Heart right ventricle (tissue), 16 donors: ENCODE measurements at regions of chr1 and their contacts with region 1.

Region 1: GRCh38 chr1:155001675-155002463 is 733 bp upstream of the ZBTB7B start:
- DNase-seq: peak; percentile 100
- ATAC-seq: peak; percentile 80 to 92 (median 86)
- H3K4me3 ChIP-seq: peak overlapping the region; percentile 50 to 97 (median 91)
- H3K27ac ChIP-seq: peak overlapping the region; percentile 80 to 98 (median 95)
- H3K4me1 ChIP-seq: peaks cover 28 to 70% (median 50%) of the 10 kb centered on the region in 9 donors
- H3K27me3 ChIP-seq: no peaks in the 10 kb centered on the region
- CTCF ChIP-seq: peak in 7 of 9 donors; percentile 14 to 64 (median 49)

Region 2: GRCh38 chr1:154936555-154937084 is 65.2 kb before region 1 on chr1 and contains the start of gene PMVK:
- intact Hi-C with region 1: no loop called
- DNase-seq: peak; percentile 92 to 98
- ATAC-seq: peak; percentile 92 to 97 (median 96)
- H3K4me3 ChIP-seq: peak within 1 kb of the TSS; percentile 44 to 70 (median 64)
- H3K27ac ChIP-seq: peak within 1 kb of the TSS; percentile 87 to 99 (median 96)
- H3K4me1 ChIP-seq: peaks cover 7 to 43% (median 25%) of the 10 kb centered on the region in 9 donors
- H3K27me3 ChIP-seq: no peaks in the 10 kb centered on the region
- CTCF ChIP-seq: peak in 8 of 9 donors; percentile 11 to 62 (median 36)
- total RNA-seq, gene PMVK: 29.9 to 66.4 (median 39.4) TPM

Region 3: GRCh38 chr1:154961497-154962262 is 40.2 kb before region 1 on chr1 and contains the start of gene PYGO2:
- intact Hi-C with region 1: loop called in 7 of 10 experiments (anchors 5 kb)
- DNase-seq: peak; percentile 83 to 84
- ATAC-seq: peak; percentile 84 to 90 (median 86)
- H3K4me3 ChIP-seq: peak within 1 kb of the TSS; percentile 81 to 99 (median 90)
- H3K27ac ChIP-seq: peak within 1 kb of the TSS; percentile 96 to 100 (median 99)
- H3K4me1 ChIP-seq: peaks cover 12 to 49% (median 33%) of the 10 kb centered on the region in 9 donors
- H3K27me3 ChIP-seq: no peaks in the 10 kb centered on the region
- CTCF ChIP-seq: peak; percentile 41 to 80 (median 62)
- total RNA-seq, gene PYGO2: 8.8 to 18.0 (median 13.9) TPM

Region 4: GRCh38 chr1:154974063-154974807 is 27.6 kb before region 1 on chr1 and contains the start of gene CKS1B:
- intact Hi-C with region 1: loop called in 3 of 10 experiments (anchors 2 kb)
- DNase-seq: peak; percentile 95 to 98
- ATAC-seq: peak; percentile 82 to 92 (median 89)
- H3K4me3 ChIP-seq: peak within 1 kb of the TSS; percentile 41 to 89 (median 66)
- H3K27ac ChIP-seq: peak within 1 kb of the TSS; percentile 90 to 100 (median 96)
- H3K4me1 ChIP-seq: peaks cover 25 to 64% (median 50%) of the 10 kb centered on the region in 9 donors
- H3K27me3 ChIP-seq: no peaks in the 10 kb centered on the region
- CTCF ChIP-seq: peak in 1 of 9 donors; percentile 18
- total RNA-seq, gene CKS1B: 10.9 to 30.9 (median 17.5) TPM

Region 5: DNA sequence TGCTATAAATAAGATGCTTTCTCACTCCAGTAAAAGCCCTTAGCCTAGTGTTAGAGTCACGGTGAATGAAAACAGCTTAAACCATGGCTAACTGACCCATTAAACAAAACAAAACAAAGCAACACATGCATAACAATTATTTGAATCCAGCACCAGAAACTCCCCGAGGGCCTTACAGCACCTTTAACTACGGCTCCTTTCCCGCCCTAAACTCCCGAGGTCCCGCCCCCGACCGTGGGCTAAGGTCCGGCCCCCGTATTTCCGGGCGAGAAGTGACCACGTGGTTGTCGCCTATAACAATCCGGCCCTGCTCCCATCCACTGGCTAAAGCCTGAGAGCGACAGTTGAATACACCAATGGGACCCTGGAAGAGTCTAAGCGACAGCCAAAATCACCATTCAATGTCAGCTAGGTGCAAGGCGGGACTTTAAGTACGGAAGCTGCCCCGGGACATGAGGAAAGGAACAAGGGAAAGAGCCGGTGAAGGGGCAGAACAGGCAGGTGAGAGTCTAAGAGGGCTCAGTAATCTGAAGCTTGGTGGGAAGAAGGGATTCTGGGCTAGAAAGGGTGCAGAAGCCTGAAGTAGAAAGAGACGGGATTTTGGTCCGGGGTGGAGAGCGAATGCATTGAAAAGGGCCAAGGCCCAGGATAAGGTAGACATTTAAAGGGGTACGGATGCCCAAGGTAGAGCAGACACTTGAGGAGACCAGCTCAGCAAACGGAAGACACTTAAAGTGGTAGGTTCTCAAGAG is 18.8 kb before region 1 on chr1 and contains the start of gene FLAD1:
- intact Hi-C with region 1: loop called in 1 of 10 experiments (anchors 2 kb)
- DNase-seq: peak; percentile 91 to 100
- ATAC-seq: peak; percentile 98 to 100 (median 100)
- H3K4me3 ChIP-seq: peak within 1 kb of the TSS; percentile 48 to 81 (median 71)
- H3K27ac ChIP-seq: peak within 1 kb of the TSS in 9 of 10 donors; percentile 41 to 87 (median 77)
- H3K4me1 ChIP-seq: peaks cover 7 to 28% (median 17%) of the 10 kb centered on the region in 9 donors
- H3K27me3 ChIP-seq: no peaks in the 10 kb centered on the region
- CTCF ChIP-seq: no peak
- total RNA-seq, gene FLAD1: 20.1 to 36.8 (median 24.1) TPM

Region 6: DNA sequence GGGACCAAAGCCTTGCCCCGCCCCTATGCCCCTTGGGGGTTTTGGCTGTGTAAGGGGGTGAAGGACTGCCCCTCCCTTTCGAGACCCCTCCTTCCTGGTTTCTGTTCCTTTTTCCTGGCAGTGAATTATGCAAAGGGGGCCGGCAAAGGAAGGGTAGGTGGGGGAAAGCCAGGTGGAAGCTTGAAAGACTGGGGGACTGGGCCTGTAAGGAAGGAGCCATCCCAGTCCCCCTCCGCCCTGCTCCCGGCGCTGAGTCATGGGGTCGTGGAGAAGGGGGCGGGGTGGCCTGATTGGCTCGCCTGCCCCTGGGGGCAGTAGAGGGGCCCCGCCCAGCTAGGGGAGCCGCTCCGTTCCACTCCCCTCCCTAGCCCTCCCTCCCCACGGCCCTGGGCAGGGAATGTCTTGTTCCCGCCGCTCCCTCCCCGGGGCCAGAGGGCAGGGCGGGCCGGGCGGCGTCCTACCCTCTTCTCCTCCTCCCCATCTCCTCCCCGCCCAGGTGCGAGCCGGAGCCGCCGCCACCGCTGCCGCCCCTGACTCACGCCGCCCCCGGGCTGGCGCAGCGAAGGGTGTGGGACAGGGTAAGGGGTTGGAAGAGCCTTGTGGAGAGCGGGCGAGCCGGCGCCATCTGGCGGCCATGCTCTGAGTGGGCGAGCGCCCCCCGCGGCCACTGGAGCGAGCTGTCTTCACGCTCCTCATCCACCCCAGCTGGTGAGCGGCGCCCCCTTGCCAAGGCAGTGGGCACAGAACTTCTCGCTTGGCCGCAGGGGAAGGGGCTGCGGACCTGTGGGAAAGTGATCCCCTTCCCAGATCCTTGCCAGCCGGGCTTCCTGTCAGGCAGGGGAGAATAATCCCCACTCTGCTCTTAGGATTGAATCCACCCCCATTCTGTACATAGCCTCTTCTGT is 15.4 kb after region 1 on chr1:
- intact Hi-C with region 1: loop called in 1 of 10 experiments (anchors 1 kb)
- DNase-seq: peak; percentile 88 to 89
- ATAC-seq: peak; percentile 88 to 95 (median 92)
- H3K4me3 ChIP-seq: peak overlapping the region in 9 of 10 donors; percentile 31 to 64 (median 57)
- H3K27ac ChIP-seq: peak overlapping the region; percentile 78 to 91 (median 85)
- H3K4me1 ChIP-seq: peaks cover 12 to 55% (median 27%) of the 10 kb centered on the region in 9 donors
- H3K27me3 ChIP-seq: no peaks in the 10 kb centered on the region
- CTCF ChIP-seq: peak; percentile 97 to 100 (median 98)

Region 7: DNA sequence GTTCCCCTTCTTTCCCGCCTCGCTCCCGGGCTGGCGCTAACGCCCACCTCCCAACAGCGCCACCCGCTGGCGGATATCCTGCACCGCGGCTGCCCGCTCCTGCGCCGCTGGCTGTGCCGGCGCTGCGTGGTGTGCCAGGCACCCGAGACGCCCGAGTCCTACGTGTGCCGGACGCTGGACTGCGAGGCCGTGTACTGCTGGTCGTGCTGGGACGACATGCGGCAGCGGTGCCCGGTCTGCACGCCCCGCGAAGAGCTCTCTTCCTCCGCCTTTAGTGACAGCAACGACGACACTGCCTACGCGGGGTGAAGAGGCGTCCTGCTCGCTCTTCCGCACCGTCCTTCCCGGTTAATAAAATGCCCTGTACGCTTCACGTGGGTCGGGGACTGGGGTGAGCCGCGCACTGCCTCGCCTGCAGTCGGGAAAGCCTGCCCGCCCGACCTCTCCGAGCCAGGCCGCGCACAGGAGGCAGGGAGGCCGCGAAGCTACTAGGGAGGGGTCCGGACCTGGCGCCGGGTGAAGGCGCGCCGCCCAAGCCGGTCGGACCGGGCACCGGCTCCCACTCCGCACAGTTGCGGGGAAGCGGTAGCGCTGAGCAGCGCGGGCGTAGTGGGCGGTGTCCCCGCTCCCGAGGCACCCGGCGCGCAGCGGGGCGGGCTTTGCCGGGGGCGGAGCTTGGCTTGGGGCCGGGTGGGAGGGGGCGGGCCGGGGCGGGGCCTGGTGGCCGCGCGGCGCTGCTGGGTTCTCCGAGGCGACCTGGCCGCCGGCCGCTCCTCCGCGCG is 48.9 kb after region 1 on chr1 and contains the start of gene ADAM15:
- intact Hi-C with region 1: loop called in 1 of 10 experiments (anchors 5 kb)
- DNase-seq: peak; percentile 82 to 88
- ATAC-seq: peak; percentile 73 to 91 (median 82)
- H3K4me3 ChIP-seq: peak within 1 kb of the TSS; percentile 51 to 98 (median 84)
- H3K27ac ChIP-seq: peak within 1 kb of the TSS; percentile 53 to 98 (median 94)
- H3K4me1 ChIP-seq: peaks cover 12 to 45% (median 27%) of the 10 kb centered on the region in 9 donors
- H3K27me3 ChIP-seq: no peaks in the 10 kb centered on the region
- CTCF ChIP-seq: peak; percentile 85 to 96 (median 92)
- total RNA-seq, gene ADAM15: 46.7 to 146 (median 58.5) TPM

Region 8: GRCh38 chr1:155063550-155064110 is 61.8 kb after region 1 on chr1 and contains the start of gene EFNA4:
- intact Hi-C with region 1: loop called in 1 of 10 experiments (anchors 10 kb)
- DNase-seq: peak; percentile 82 to 89
- ATAC-seq: peak; percentile 82 to 89 (median 87)
- H3K4me3 ChIP-seq: peak within 1 kb of the TSS; percentile 43 to 97 (median 84)
- H3K27ac ChIP-seq: peak within 1 kb of the TSS in 9 of 10 donors; percentile 23 to 91 (median 76)
- H3K4me1 ChIP-seq: peaks cover 16 to 47% (median 33%) of the 10 kb centered on the region in 9 donors
- H3K27me3 ChIP-seq: no peaks in the 10 kb centered on the region
- CTCF ChIP-seq: no peak
- total RNA-seq, gene EFNA4: 0.49 to 2.8 (median 1.8) TPM

Region 9: GRCh38 chr1:155329971-155330598 is 328.2 kb after region 1 on chr1:
- intact Hi-C with region 1: no loop called
- DNase-seq: no peak
- ATAC-seq: no peak
- H3K4me3 ChIP-seq: no peak overlapping the region
- H3K27ac ChIP-seq: no peak overlapping the region
- H3K4me1 ChIP-seq: peaks cover 0 to 15% (median 7%) of the 10 kb centered on the region in 9 donors
- H3K27me3 ChIP-seq: no peaks in the 10 kb centered on the region
- CTCF ChIP-seq: no peak